ENCODE measurements at regions of chr3 and their contacts with region 1.

Region 1: DNA sequence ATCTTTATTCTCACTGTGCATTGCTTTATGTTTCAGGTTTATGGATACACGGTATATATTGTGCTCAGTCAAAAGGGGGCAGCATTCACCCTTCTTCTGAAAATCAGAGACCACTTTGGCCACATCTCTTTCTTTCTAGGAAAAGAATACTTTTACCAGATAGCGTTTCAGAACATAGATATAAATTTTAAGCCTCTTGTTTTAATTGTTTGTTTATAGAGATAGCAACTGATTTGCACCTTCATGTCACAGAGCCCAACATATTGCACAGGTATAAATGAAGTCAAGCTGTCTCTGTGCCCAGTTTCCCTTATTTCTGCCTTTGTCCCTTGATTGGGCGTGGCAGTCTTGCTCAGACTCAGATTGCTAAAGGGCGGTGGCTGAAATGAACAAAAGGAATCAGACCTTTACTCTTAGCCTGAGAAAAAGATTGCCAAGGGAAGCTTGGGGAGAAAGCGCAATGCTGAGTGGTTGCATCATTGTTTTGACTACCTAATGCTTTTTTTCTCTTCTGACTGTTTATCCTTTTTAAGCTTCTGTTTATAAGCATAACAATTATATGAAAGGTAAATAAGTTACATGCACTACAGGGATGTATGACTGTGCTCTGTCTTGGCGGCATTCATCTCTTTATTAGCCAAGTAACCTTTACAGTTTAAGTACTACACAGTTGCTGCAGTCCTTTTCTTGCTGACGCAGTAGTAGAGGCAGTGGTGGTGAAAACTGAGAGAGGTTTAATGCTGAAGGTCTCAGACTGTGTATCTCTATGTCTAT is 70.8 kb upstream of the ZBTB20 start:
- DNase-seq: peak in 5 of 9 donors; percentile 1 to 19 (median 3)
- ATAC-seq: peak; percentile 52
- H3K4me3 ChIP-seq: no peak overlapping the region
- H3K4me3 Mint-ChIP-seq: no peak overlapping the region
- H3K27ac ChIP-seq: no peak overlapping the region
- H3K27ac Mint-ChIP-seq: no peak overlapping the region
- H3K4me1 ChIP-seq: no peaks in the 10 kb centered on the region
- H3K4me1 Mint-ChIP-seq: no peaks in the 10 kb centered on the region
- H3K27me3 ChIP-seq: no peaks in the 10 kb centered on the region
- H3K27me3 Mint-ChIP-seq: peaks cover 0 to 17% (median 4%) of the 10 kb centered on the region in 5 donors

Region 2: GRCh38 chr3:115819785-115820384 is 602.0 kb after region 1 on chr3:
- CTCF ChIA-PET with region 1: interaction called, 3 read pairs
- POLR2A ChIA-PET with region 1: no interaction called
- intact Hi-C with region 1: loop called in 1 of 2 experiments (anchors 10 kb)
- DNase-seq: peak in 8 of 9 donors; percentile 26 to 67 (median 62)
- ATAC-seq: peak; percentile 97
- H3K4me3 ChIP-seq: no peak overlapping the region
- H3K4me3 Mint-ChIP-seq: no peak overlapping the region
- H3K27ac ChIP-seq: no peak overlapping the region
- H3K27ac Mint-ChIP-seq: no peak overlapping the region
- H3K4me1 ChIP-seq: no peaks in the 10 kb centered on the region
- H3K4me1 Mint-ChIP-seq: peaks cover 0 to 2% (median 0%) of the 10 kb centered on the region in 7 donors
- H3K27me3 ChIP-seq: no peaks in the 10 kb centered on the region
- H3K27me3 Mint-ChIP-seq: peaks cover 0 to 9% (median 0%) of the 10 kb centered on the region in 5 donors